Endothelial cell of umbilical vein (primary cell): ENCODE measurements at regions of chr6 and their contacts with region 1.

Region 1: DNA sequence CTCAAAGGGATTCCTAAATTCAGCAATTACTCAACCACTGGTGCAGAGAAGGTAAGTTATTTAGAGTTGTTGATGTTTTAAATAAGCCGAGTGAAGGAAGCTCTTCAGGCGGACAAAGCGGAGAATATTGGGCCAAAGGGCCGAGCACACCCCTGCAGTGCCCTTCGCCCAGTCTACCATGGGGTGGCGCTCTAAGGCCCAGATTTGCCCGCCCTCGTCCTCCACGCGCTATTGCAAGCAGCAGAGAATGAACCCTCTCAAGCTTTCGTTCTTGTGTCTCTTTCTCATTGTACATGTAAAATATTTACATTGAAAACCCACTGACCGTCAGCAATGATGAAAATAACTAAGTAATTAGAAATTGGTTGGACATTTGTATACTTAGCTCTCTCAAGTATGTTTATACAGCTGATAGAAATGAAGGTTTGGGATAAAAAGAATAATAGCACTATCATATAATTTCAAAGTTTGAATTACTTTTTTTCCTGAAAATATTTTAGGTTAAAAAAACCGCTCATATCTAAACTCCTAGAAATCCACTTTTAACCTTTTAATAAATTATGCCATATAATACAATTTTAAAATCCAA is 195.0 kb upstream of the CEP162 start:
- DNase-seq: peak; percentile 77
- H3K4me3 ChIP-seq: no peak overlapping the region
- H3K27ac ChIP-seq: no peak overlapping the region
- H3K4me1 ChIP-seq: no peaks in the 10 kb centered on the region
- H3K27me3 ChIP-seq: no peaks in the 10 kb centered on the region
- CTCF ChIP-seq: peak; percentile 93 to 95
- POLR2A ChIP-seq: no peak

Region 2: GRCh38 chr6:83884523-83884922 is 538.0 kb before region 1 on chr6:
- CTCF ChIA-PET with region 1: interaction called, 4 read pairs
- POLR2A ChIA-PET with region 1: no interaction called
- dilution Hi-C with region 1: no loop called
- intact Hi-C with region 1: loop called (anchors 1 kb)
- DNase-seq: peak; percentile 84
- H3K4me3 ChIP-seq: no peak overlapping the region
- H3K27ac ChIP-seq: no peak overlapping the region
- H3K4me1 ChIP-seq: peaks cover 9% of the 10 kb centered on the region
- H3K27me3 ChIP-seq: no peaks in the 10 kb centered on the region
- CTCF ChIP-seq: peak; percentile 41 to 59
- POLR2A ChIP-seq: no peak

Region 3: DNA sequence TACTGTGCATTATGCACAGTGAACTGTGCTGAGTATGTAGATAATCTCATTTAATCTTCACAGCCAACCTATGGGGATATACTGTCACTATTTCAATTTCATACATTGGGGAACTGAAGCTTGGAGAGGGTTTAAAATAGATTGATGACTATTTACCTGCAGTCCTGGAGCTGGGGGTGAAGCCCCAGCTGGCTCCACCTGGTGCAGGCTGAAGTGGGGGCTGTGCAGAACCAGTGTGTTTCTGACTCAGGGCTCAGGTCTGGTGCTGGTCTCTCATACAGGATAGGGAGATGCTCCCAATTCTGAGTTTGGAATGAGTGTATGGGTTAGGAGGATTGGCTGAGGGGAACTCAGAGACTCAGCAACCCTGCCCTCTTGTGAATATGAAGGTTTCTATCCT is 18.9 kb before region 1 on chr6:
- CTCF ChIA-PET with region 1: no interaction called
- POLR2A ChIA-PET with region 1: no interaction called
- dilution Hi-C with region 1: no loop called
- intact Hi-C with region 1: no loop called
- DNase-seq: no peak
- H3K4me3 ChIP-seq: no peak overlapping the region
- H3K27ac ChIP-seq: no peak overlapping the region
- H3K4me1 ChIP-seq: no peaks in the 10 kb centered on the region
- H3K27me3 ChIP-seq: peaks cover 2 to 9% of the 10 kb centered on the region in 2 experiments
- CTCF ChIP-seq: no peak
- POLR2A ChIP-seq: no peak

Region 4: DNA sequence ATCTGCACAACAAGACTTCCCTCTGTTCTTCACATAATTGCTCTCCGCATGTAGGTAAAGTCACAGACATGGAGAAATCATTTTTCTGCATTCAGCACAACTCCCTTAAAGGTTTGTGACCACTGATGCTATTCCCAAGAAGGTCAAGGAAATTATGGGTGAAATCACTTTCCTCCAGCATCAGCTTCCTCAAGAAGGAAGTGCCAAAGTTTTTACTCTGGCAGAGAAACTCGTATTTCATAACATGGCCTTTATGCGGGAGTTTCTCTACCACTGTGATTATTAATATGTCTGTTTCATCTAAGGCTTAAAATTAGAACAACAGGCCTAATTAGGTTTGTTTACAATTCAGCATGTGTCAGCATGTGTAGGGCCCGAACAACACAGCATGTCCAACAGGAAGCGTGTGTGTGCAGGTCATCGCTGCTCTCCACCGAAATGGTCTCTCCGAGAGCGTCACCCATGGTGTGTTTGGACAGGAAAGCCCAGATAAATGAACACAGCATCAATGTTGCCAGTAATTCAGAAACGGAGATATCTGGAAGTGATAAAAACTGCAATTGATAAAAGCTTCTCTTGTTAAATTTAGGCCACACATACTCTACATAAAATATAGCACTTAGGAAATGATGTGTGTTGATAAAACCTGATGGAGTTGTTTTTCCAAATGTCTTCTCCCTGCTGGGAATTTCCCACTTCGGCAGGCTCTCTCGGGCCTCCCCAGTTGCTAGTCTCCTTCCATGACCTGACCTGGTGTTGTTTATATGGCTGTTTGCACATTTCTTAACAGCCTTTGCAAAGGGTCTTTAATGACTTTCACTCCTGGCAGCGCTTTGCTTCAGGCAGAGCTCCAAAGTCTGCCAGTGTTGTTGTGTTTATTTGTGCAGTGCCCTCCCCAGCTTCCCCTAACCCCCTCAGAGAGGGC is 70.0 kb after region 1 on chr6:
- CTCF ChIA-PET with region 1: interaction called, 14 read pairs
- POLR2A ChIA-PET with region 1: no interaction called
- dilution Hi-C with region 1: no loop called
- intact Hi-C with region 1: no loop called
- DNase-seq: peak; percentile 91
- H3K4me3 ChIP-seq: no peak overlapping the region
- H3K27ac ChIP-seq: peak overlapping the region; percentile 87
- H3K4me1 ChIP-seq: peaks cover 28% of the 10 kb centered on the region
- H3K27me3 ChIP-seq: no peaks in the 10 kb centered on the region
- CTCF ChIP-seq: no peak
- POLR2A ChIP-seq: peak; percentile 50

Region 5: DNA sequence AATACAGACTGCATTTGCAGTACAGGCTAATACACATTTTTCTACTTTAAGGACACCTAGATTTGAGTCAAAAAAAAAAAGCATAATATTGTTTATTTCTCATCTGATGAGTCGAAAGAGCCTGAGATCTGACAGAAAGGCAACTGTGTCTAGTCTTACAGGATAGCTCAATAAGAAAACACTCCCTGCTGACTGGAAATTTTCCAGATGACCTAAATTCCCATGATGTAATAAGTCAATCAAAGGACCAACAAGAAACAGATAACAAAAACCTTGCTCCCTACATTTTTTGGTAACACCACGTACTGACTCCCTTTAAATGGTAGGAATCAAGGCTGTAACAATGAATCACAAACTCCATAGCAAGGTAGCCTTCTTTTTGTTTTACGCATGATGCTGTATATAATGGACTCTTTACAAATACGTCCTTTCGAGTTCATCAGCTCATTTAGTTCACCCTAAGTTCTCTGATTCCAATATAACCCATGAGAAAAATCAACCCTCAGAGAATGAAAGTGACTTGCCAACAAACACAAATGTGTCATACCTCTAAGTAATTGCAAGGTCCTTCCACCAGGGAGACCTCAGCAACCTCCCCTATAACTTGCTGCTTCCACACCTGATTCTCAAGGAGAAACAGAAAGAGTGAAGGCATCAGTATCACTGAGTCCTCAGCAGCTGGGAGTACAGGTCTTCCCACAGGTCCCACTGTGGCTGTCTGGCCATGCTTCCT is 329.8 kb after region 1 on chr6:
- CTCF ChIA-PET with region 1: interaction called, 17 read pairs
- POLR2A ChIA-PET with region 1: no interaction called
- dilution Hi-C with region 1: no loop called
- intact Hi-C with region 1: no loop called
- DNase-seq: no peak
- H3K4me3 ChIP-seq: no peak overlapping the region
- H3K27ac ChIP-seq: no peak overlapping the region
- H3K4me1 ChIP-seq: peaks cover 2% of the 10 kb centered on the region
- H3K27me3 ChIP-seq: no peaks in the 10 kb centered on the region
- CTCF ChIP-seq: peak in 1 of 2 donors; percentile 9
- POLR2A ChIP-seq: no peak

Region 6: DNA sequence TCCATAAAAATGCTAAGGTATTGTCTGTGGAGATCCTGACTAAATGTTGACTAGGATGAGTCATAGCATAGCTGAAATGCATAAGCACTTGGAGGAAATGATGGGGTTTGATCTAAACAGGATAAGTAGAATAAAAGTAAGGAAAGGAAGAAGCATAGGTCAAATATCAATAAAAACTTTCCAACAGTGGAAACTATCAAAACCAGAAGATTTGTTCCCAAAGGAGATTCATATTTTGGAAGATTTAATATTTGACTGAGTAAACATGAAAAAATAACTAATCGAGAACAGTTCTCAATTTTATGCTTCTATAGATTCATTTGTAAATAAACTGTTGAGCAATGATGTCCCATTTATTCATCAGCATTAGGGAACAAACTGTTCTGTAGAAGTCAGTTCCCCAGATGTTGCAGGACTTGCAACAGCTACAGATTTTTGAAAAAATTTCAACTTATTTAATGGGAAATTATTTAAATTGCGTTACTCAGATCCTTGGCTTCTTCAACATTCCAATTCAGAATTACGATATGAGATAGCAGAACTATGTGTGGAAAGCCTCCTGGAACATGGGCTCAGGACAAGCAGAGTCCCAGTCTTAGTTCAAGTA is 475.6 kb after region 1 on chr6:
- CTCF ChIA-PET with region 1: no interaction called
- POLR2A ChIA-PET with region 1: no interaction called
- dilution Hi-C with region 1: no loop called
- intact Hi-C with region 1: loop called (anchors 5 kb)
- DNase-seq: peak; percentile 87
- H3K4me3 ChIP-seq: no peak overlapping the region
- H3K27ac ChIP-seq: peak overlapping the region; percentile 71
- H3K4me1 ChIP-seq: peaks cover 21% of the 10 kb centered on the region
- H3K27me3 ChIP-seq: no peaks in the 10 kb centered on the region
- CTCF ChIP-seq: no peak
- POLR2A ChIP-seq: no peak

Region 7: DNA sequence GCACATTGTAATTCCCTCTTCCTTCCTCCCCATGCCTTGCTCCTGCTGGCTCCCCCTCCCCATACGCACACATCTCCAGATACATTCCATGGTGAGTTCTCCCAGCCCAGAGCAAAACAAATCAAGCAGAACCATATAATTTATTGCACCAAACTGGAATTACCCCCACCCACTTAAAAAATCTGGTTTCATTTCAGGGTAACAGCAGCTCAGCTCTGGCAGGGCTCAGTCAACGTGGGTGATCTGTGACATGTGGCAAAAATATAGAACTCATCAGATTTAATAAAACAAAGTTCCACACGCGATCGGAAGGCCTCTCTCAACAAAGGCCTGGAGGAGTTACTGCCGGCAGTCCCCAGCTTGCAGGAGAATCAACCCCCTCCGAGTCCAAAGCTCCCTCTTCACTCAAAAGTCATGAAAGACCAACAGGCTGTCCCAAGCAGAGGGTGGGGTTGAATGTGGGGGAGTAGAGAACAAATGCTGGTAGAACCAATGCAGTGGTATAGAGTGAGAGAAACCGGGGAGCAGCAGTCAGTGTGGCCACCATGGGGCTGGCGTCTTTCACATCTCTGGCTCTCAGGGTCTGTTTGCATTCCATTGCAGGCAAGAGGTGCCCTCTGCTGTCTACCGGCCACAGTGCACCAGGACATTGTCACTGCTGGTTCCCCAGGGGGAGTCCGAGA is 704.2 kb after region 1 on chr6:
- CTCF ChIA-PET with region 1: interaction called, 27 read pairs
- POLR2A ChIA-PET with region 1: no interaction called
- dilution Hi-C with region 1: no loop called
- intact Hi-C with region 1: loop called (anchors 1 kb)
- DNase-seq: peak; percentile 75
- H3K4me3 ChIP-seq: no peak overlapping the region
- H3K27ac ChIP-seq: no peak overlapping the region
- H3K4me1 ChIP-seq: no peaks in the 10 kb centered on the region
- H3K27me3 ChIP-seq: peaks cover 14 to 17% of the 10 kb centered on the region in 2 experiments
- CTCF ChIP-seq: peak; percentile 72 to 89
- POLR2A ChIP-seq: no peak